B cell (primary cell): ENCODE measurements at regions of chr14 and their contacts with region 1.

Region 1: DNA sequence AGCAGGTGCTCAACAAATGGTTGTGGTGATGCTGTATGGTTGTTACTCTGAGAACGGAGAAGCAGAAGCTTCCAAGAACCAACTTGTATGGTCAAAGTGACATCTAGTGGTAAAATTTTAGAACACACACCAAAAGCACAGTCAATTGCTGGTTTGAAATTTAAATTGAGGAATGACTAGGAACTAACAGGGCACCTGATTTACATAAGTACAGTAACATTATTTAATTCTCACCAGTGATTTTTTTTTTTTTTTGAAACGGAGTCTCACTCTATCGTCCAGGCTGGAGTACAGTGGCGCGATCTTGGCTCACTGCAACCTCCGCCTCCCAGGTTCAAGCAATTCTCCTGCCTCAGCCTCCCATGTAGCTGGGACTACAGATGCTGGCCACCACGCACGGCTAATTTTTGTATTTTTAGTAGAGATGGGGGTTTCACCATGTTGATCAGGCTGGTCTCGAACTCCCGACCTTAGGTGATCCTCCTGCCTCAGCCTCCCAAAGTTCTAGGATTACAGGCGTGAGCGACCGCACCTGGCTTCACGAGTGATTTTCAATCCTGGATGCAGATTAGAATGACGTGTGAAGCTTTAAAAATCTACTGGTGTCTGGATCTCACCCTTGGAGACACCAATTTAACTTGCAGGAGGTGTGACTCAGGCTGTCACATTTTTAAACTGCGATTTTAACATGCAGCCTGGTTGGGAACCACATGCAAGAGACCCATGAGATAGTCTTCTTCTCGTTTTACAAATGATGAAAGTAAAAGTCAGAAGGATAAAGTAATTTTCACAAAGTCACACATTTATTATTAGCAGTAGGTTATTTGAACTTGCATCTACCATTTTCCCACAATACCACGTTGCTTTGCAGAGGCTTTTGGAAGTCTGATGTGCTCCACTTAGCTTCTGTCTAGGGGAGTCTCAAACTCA is 14.1 kb upstream of the NUMB start:
- DNase-seq: peak; percentile 81
- ATAC-seq: peak; percentile 93
- H3K4me3 ChIP-seq: no peak overlapping the region
- H3K4me3 Mint-ChIP-seq: no peak overlapping the region
- H3K27ac ChIP-seq: no peak overlapping the region
- H3K27ac Mint-ChIP-seq: no peak overlapping the region
- H3K4me1 ChIP-seq: peaks cover 0 to 2% of the 10 kb centered on the region in 2 donors
- H3K4me1 Mint-ChIP-seq: peaks cover 3% of the 10 kb centered on the region
- H3K27me3 ChIP-seq: no peaks in the 10 kb centered on the region
- H3K27me3 Mint-ChIP-seq: no peaks in the 10 kb centered on the region
- CTCF ChIP-seq: peak; percentile 80

Region 2: DNA sequence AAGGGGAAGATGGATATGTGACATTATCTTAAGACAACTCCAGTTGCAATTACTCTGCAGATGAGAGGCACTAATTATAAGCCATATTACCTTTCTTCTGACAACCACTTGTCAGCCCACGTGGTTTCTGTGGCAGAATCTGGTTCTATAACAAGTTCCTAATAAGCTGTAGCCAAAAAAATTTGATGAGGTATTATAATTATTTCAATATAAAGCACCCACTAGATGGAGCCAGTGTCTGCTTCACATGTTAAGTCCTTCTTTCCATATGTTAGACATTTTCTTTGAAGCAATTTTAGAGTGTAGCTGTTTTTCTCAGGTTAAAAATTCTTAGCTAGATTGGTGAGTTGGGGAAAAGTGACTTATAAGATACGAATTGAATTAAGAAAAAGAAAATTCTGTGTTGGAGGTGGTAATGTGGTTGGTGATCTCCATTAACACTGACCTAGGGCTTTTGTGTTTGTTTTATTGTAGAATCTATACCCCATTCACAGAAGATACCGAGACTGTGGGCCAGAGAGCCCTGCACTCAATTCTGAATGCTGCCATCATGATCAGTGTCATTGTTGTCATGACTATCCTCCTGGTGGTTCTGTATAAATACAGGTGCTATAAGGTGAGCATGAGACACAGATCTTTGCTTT is 299.2 kb before region 1 on chr14:
- CTCF ChIA-PET with region 1: interaction called, 32 read pairs
- POLR2A ChIA-PET with region 1: no interaction called
- intact Hi-C with region 1: loop called (anchors 1 kb)
- DNase-seq: peak; percentile 52
- ATAC-seq: no peak
- H3K4me3 ChIP-seq: no peak overlapping the region
- H3K4me3 Mint-ChIP-seq: no peak overlapping the region
- H3K27ac ChIP-seq: peak overlapping the region in 1 of 2 donors; percentile 17
- H3K27ac Mint-ChIP-seq: no peak overlapping the region
- H3K4me1 ChIP-seq: no peaks in the 10 kb centered on the region
- H3K4me1 Mint-ChIP-seq: no peaks in the 10 kb centered on the region
- H3K27me3 ChIP-seq: no peaks in the 10 kb centered on the region
- H3K27me3 Mint-ChIP-seq: no peaks in the 10 kb centered on the region
- CTCF ChIP-seq: peak; percentile 71

Region 3: GRCh38 chr14:73245401-73246325 is 226.8 kb before region 1 on chr14:
- CTCF ChIA-PET with region 1: interaction called, 3 read pairs
- POLR2A ChIA-PET with region 1: interaction called, 11 read pairs
- intact Hi-C with region 1: no loop called
- DNase-seq: peak; percentile 82
- ATAC-seq: peak; percentile 84
- H3K4me3 ChIP-seq: peak overlapping the region in 4 of 5 experiments; percentile 63 to 70 (median 66)
- H3K4me3 Mint-ChIP-seq: peak overlapping the region; percentile 75
- H3K27ac ChIP-seq: peak overlapping the region in 1 of 2 donors; percentile 29
- H3K27ac Mint-ChIP-seq: no peak overlapping the region
- H3K4me1 ChIP-seq: peaks cover 58 to 73% of the 10 kb centered on the region in 2 donors
- H3K4me1 Mint-ChIP-seq: peaks cover 71% of the 10 kb centered on the region
- H3K27me3 ChIP-seq: peaks cover 0 to 26% (median 9%) of the 10 kb centered on the region in 4 experiments
- H3K27me3 Mint-ChIP-seq: peaks cover 23% of the 10 kb centered on the region
- CTCF ChIP-seq: no peak

Region 4: DNA sequence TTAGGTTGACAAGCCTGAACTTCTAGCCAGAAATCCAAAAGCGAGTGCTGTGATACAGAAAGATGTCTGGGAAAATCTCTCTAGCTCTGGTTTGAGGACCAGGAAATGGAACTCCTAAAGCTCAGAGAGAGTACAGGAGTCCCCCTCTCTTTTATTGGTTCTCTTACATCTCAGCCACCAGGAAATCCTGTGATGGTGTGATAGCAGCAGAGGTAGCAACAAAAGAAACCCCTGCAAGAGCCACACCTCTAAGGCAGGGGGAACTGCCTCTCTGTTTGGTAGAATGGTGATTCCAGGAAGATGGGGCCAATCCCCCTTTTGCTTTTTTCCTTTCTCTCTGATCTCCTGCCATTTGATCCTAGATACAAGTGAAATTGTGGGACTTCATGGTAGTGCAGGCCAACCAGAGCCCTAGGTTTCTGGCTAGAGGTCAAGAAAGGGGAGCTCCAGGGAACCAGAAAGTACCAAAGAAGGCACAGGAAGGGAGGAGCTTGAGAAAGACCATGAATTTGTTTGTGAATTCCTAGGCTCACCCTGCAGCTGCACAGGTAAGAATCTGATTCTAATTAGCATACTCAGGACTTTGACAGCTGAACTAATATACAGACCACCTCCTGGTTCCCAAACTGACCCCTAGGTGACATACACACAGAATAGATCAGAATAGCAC is 146.7 kb before region 1 on chr14:
- CTCF ChIA-PET with region 1: interaction called, 11 read pairs
- POLR2A ChIA-PET with region 1: no interaction called
- intact Hi-C with region 1: no loop called
- DNase-seq: no peak
- ATAC-seq: no peak
- H3K4me3 ChIP-seq: no peak overlapping the region
- H3K4me3 Mint-ChIP-seq: no peak overlapping the region
- H3K27ac ChIP-seq: peak overlapping the region in 1 of 2 donors; percentile 13
- H3K27ac Mint-ChIP-seq: no peak overlapping the region
- H3K4me1 ChIP-seq: peaks cover 7 to 10% of the 10 kb centered on the region in 2 donors
- H3K4me1 Mint-ChIP-seq: peaks cover 27% of the 10 kb centered on the region
- H3K27me3 ChIP-seq: no peaks in the 10 kb centered on the region
- H3K27me3 Mint-ChIP-seq: no peaks in the 10 kb centered on the region
- CTCF ChIP-seq: no peak

Region 5: GRCh38 chr14:73422515-73422914 is 49.9 kb before region 1 on chr14:
- CTCF ChIA-PET with region 1: no interaction called
- POLR2A ChIA-PET with region 1: no interaction called
- intact Hi-C with region 1: no loop called
- DNase-seq: no peak
- ATAC-seq: no peak
- H3K4me3 ChIP-seq: no peak overlapping the region
- H3K4me3 Mint-ChIP-seq: peak overlapping the region; percentile 30
- H3K27ac ChIP-seq: no peak overlapping the region
- H3K27ac Mint-ChIP-seq: peak overlapping the region; percentile 66
- H3K4me1 ChIP-seq: peaks cover 29 to 33% of the 10 kb centered on the region in 2 donors
- H3K4me1 Mint-ChIP-seq: peaks cover 42% of the 10 kb centered on the region
- H3K27me3 ChIP-seq: no peaks in the 10 kb centered on the region
- H3K27me3 Mint-ChIP-seq: no peaks in the 10 kb centered on the region
- CTCF ChIP-seq: no peak

Region 6: GRCh38 chr14:73458151-73458976 is 14.1 kb before region 1 on chr14 and contains the start of gene NUMB:
- CTCF ChIA-PET with region 1: interaction called, 46 read pairs
- POLR2A ChIA-PET with region 1: interaction called, 8 read pairs
- intact Hi-C with region 1: loop called (anchors 2 kb)
- DNase-seq: peak; percentile 99
- ATAC-seq: peak; percentile 97
- H3K4me3 ChIP-seq: peak within 1 kb of the TSS; percentile 74 to 97 (median 95)
- H3K4me3 Mint-ChIP-seq: peak within 1 kb of the TSS; percentile 96
- H3K27ac ChIP-seq: peak within 1 kb of the TSS; percentile 74 to 91
- H3K27ac Mint-ChIP-seq: peak within 1 kb of the TSS; percentile 95
- H3K4me1 ChIP-seq: peaks cover 23 to 34% of the 10 kb centered on the region in 2 donors
- H3K4me1 Mint-ChIP-seq: peaks cover 53% of the 10 kb centered on the region
- H3K27me3 ChIP-seq: no peaks in the 10 kb centered on the region
- H3K27me3 Mint-ChIP-seq: no peaks in the 10 kb centered on the region
- CTCF ChIP-seq: no peak
- total RNA-seq, gene NUMB: 102 and 108 TPM in 2 replicates